Activated CD4-positive, alpha-beta T cell treated with anti-CD3 and anti-CD28 coated beads for 36 hours (primary cell): ENCODE measurements at regions of chr11 and their contacts with region 1.

Region 1: GRCh38 chr11:34926101-34926830 is 9.8 kb downstream of the PDHX start:
- DNase-seq: peak; percentile 8
- ATAC-seq: peak; percentile 68
- H3K4me3 Mint-ChIP-seq: no peak overlapping the region
- H3K27ac Mint-ChIP-seq: no peak overlapping the region
- H3K4me1 Mint-ChIP-seq: peaks cover 20% of the 10 kb centered on the region
- H3K27me3 Mint-ChIP-seq: no peaks in the 10 kb centered on the region

Region 2: DNA sequence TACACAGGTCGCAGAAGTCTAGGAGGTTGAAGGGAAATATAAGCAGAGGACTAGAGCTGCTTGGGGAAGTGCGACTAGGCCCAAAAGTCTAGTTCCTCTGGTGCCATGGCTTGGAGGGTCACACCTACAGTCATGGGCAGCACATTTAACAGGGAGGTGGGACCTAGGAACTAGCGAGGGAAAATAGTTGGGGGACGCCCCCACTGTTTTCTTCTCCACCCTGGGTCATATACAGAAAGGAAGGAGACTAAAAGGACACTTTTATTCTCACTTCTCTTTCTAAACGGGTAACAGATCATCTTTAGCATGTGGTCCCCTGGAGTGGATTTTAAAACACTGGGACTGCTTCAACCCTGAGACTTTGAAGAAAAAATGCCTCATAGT is 26.6 kb before region 1 on chr11:
- CTCF ChIA-PET with region 1: no interaction called
- POLR2A ChIA-PET with region 1: no interaction called
- intact Hi-C with region 1: no loop called
- DNase-seq: peak; percentile 33
- ATAC-seq: no peak
- H3K4me3 Mint-ChIP-seq: no peak overlapping the region
- H3K27ac Mint-ChIP-seq: no peak overlapping the region
- H3K4me1 Mint-ChIP-seq: no peaks in the 10 kb centered on the region
- H3K27me3 Mint-ChIP-seq: no peaks in the 10 kb centered on the region

Region 3: DNA sequence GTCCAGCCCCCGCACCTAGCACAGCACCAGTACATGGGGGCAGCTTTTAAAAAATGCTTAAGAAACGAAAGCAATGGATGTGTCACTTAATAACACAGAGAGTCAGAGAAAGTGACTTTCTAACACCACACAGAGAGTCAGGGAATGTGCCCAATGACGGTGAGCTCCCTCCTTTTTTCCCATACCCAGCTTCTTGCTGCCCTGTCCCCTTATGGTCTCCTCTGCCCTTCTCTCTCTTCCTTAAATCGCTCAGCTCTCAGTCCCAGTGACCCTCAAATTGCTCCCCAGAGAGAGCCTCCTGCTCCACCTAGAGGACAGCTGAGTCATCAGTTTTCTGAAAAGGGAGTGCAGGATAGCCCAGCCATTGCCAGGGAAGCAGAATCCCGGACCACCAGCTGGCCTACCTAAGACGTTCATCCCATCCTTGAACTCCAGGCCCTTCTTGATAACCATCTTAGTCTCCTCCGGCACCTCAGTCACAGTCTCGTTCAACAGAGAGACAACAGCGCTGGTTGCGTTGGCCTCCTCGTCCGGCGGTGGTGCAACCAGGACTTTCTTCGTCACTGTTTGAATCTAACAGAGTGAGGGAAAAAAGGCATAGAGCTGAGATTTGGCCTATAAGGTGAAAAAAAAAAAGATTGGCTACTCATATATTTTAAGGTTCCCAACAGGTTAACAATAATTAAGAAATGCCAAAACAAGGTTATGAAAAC is 379.6 kb after region 1 on chr11:
- CTCF ChIA-PET with region 1: interaction called, 3 read pairs
- POLR2A ChIA-PET with region 1: no interaction called
- intact Hi-C with region 1: loop called in 1 of 2 experiments (anchors 2 kb)
- DNase-seq: peak; percentile 39
- ATAC-seq: peak; percentile 70
- H3K4me3 Mint-ChIP-seq: no peak overlapping the region
- H3K27ac Mint-ChIP-seq: peak overlapping the region; percentile 69
- H3K4me1 Mint-ChIP-seq: peaks cover 20% of the 10 kb centered on the region
- H3K27me3 Mint-ChIP-seq: no peaks in the 10 kb centered on the region